Calu3 (cell line): ENCODE measurements at regions of chr3 and their contacts with region 1.

Region 1: DNA sequence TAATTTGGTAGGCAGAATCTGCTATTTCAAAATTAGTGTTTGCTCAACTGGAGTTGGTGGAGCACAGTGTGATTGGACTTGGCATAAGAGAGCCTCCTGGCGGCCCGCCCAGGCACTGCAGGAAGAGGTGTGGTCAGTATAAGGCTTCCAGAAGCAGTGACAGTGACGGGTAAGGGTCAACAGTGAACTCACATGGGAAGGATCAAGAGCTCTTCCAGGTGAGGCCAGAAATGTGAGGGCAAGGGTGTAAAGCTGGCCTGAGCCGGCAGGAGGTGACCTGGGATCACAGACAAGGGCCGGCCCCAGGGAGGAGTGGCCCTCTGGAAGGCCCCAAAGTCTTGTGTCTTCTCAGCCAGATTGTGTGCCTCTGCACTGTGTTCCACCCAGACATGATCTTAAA is 93.2 kb upstream of the RNF7 start:
- DNase-seq: peak; percentile 87
- H3K4me3 Mint-ChIP-seq: no peak overlapping the region
- H3K27ac Mint-ChIP-seq: no peak overlapping the region
- H3K4me1 Mint-ChIP-seq: no peaks in the 10 kb centered on the region
- H3K27me3 Mint-ChIP-seq: no peaks in the 10 kb centered on the region
- CTCF ChIP-seq: peak; percentile 88

Region 2: GRCh38 chr3:140091143-140091542 is 1553.8 kb before region 1 on chr3:
- CTCF ChIA-PET with region 1: interaction called, 11 read pairs
- intact Hi-C with region 1: no loop called
- DNase-seq: no peak
- H3K4me3 Mint-ChIP-seq: no peak overlapping the region
- H3K27ac Mint-ChIP-seq: no peak overlapping the region
- H3K4me1 Mint-ChIP-seq: no peaks in the 10 kb centered on the region
- H3K27me3 Mint-ChIP-seq: peaks cover 37% of the 10 kb centered on the region
- CTCF ChIP-seq: no peak

Region 3: GRCh38 chr3:141303481-141304223 is 341.3 kb before region 1 on chr3:
- CTCF ChIA-PET with region 1: no interaction called
- intact Hi-C with region 1: loop called (anchors 10 kb)
- DNase-seq: peak; percentile 89
- H3K4me3 Mint-ChIP-seq: no peak overlapping the region
- H3K27ac Mint-ChIP-seq: no peak overlapping the region
- H3K4me1 Mint-ChIP-seq: peaks cover 7% of the 10 kb centered on the region
- H3K27me3 Mint-ChIP-seq: peaks cover 19% of the 10 kb centered on the region
- CTCF ChIP-seq: peak; percentile 82

Region 4: DNA sequence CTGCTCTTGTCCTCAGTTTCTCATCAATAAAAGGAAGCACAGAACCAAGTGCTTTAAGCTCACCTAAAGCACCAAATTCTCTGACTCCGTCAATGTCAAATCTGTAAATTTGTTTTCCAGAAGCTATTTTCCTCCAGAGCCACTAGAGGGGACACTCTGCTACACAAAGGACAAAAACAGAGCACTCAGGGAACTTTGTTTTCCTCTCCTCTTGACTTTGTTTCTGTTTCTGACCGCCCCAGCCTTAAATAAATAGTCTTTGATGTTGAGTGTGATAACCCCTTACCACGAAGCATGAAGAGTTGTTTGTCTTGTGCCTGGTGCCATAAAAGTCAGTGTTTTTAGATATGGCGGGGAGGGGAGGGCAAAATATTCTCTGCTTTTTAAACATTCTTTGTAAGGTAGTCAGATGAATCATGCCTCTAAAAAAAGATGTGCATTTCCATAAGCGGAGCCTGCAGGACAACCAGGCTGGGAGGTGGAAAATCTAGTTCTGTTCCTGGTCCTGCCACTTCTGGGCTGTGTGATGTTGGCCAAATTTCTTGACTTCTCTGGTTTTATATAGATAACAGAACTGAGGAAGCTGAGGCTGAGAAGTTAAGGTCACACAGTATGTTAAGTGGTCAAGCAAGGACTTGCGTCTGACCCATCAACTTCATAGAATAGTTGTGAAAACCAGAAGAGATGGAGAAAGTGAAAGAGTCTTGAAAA is 283.9 kb before region 1 on chr3:
- CTCF ChIA-PET with region 1: no interaction called
- intact Hi-C with region 1: no loop called
- DNase-seq: peak; percentile 69
- H3K4me3 Mint-ChIP-seq: peak overlapping the region; percentile 11
- H3K27ac Mint-ChIP-seq: peak overlapping the region; percentile 32
- H3K4me1 Mint-ChIP-seq: peaks cover 35% of the 10 kb centered on the region
- H3K27me3 Mint-ChIP-seq: no peaks in the 10 kb centered on the region
- CTCF ChIP-seq: peak; percentile 86

Region 5: GRCh38 chr3:141460097-141460704 is 184.7 kb before region 1 on chr3:
- CTCF ChIA-PET with region 1: no interaction called
- intact Hi-C with region 1: loop called (anchors 5 kb)
- DNase-seq: peak; percentile 96
- H3K4me3 Mint-ChIP-seq: no peak overlapping the region
- H3K27ac Mint-ChIP-seq: no peak overlapping the region
- H3K4me1 Mint-ChIP-seq: peaks cover 27% of the 10 kb centered on the region
- H3K27me3 Mint-ChIP-seq: no peaks in the 10 kb centered on the region
- CTCF ChIP-seq: peak; percentile 90

Region 6: GRCh38 chr3:141544697-141545096 is 100.2 kb before region 1 on chr3:
- CTCF ChIA-PET with region 1: no interaction called
- intact Hi-C with region 1: no loop called
- DNase-seq: no peak
- H3K4me3 Mint-ChIP-seq: no peak overlapping the region
- H3K27ac Mint-ChIP-seq: no peak overlapping the region
- H3K4me1 Mint-ChIP-seq: peaks cover 17% of the 10 kb centered on the region
- H3K27me3 Mint-ChIP-seq: no peaks in the 10 kb centered on the region
- CTCF ChIP-seq: no peak

Region 7: DNA sequence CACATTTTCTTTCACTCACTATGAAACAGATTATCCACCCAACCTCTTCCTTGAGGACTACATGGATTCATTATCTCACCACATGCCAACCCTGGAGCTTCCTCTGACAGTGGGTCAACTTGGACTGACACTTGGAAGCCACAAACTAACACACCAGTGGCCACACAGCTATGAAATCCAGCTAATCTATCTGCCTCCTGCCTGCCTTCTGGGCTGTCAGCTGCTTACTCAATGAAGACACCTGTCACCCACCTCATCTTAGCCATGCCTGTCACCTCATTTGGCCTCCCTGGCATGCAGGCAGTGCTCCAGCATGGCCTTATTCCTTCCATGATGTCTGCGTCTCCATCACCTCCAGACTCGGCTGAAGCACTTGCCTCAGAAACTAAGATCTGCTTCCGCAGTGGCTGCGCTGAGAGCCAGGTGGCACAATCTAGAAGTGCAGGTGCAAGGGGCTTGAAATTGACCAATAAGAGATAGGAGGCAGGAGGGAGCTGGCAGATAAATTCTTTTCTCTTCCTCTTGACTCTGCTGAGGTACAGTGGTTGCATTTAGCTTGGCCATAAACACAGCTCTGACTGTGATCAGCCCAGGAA is 12.1 kb before region 1 on chr3:
- CTCF ChIA-PET with region 1: interaction called, 12 read pairs
- intact Hi-C with region 1: no loop called
- DNase-seq: no peak
- H3K4me3 Mint-ChIP-seq: no peak overlapping the region
- H3K27ac Mint-ChIP-seq: no peak overlapping the region
- H3K4me1 Mint-ChIP-seq: no peaks in the 10 kb centered on the region
- H3K27me3 Mint-ChIP-seq: no peaks in the 10 kb centered on the region
- CTCF ChIP-seq: no peak